ENCODE measurements at regions of chr17 and their contacts with region 1.

Region 1: DNA sequence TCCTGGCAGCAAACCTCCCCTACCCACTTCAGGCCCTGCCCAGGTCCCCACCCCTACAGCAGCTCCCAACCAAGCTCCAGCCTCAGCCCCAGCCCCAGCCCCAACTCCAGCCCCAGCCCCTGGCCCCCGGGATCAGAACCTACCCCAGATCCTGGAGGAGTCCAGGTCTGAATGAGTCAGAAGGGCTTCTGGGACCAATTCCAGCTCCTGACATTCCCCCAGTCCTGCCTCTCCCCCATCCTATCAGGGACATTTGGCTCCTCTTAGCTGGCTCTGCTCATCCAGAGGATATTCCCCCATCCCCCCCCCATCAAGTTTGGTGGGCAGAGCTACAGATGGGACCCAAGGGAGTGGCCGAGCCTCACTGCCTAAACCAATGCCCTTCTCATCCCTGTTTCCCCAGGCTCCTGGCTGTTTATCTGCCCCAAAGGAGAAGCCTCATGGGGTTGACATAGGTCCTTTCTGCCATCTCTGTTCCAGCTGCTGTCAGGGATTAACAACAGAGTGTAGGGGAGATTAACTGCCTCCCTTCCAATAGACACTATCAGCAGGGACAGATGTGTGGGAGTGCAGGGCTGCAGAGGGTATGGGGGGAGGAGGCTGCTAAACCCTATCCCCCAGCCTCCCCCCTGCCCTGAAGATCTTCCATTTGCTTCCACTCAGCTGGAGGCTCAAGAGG is 16.5 kb downstream of the CNTNAP1 start:
- DNase-seq: peak; percentile 97 to 99 (median 98)
- ATAC-seq: peak; percentile 92
- H3K4me3 ChIP-seq: no peak overlapping the region
- H3K27ac ChIP-seq: peak overlapping the region; percentile 71; the same call in 2 of the 3 replicates
- H3K4me1 ChIP-seq: peaks cover 28 to 34% of the 10 kb centered on the region in 2 experiments
- H3K27me3 ChIP-seq: no peaks in the 10 kb centered on the region
- CTCF ChIP-seq: no peak; a peak in 1 of 6 replicates
- EP300 ChIP-seq: peak; percentile 100
- POLR2A ChIP-seq: no peak
- RAD21 ChIP-seq: peak in 1 of 2 experiments; percentile 52; a peak in 2 of 4 replicates

Region 2: GRCh38 chr17:42517516-42517915 is 181.4 kb before region 1 on chr17:
- CTCF ChIA-PET with region 1: no interaction called
- POLR2A ChIA-PET with region 1: no interaction called
- in situ Hi-C with region 1: no loop called
- intact Hi-C with region 1: no loop called
- DNase-seq: peak; percentile 85 to 94 (median 91)
- ATAC-seq: peak; percentile 80
- H3K4me3 ChIP-seq: no peak overlapping the region
- H3K27ac ChIP-seq: peak overlapping the region; percentile 86
- H3K4me1 ChIP-seq: peaks cover 51 to 63% of the 10 kb centered on the region in 2 experiments
- H3K27me3 ChIP-seq: no peaks in the 10 kb centered on the region
- CTCF ChIP-seq: peak; percentile 98
- EP300 ChIP-seq: no peak
- POLR2A ChIP-seq: no peak
- RAD21 ChIP-seq: peak; percentile 73 to 82

Region 3: GRCh38 chr17:42677008-42677857 is 21.6 kb before region 1 on chr17:
- CTCF ChIA-PET with region 1: no interaction called
- POLR2A ChIA-PET with region 1: interaction called, 8 read pairs
- in situ Hi-C with region 1: no loop called
- intact Hi-C with region 1: loop called (anchors 1 kb)
- DNase-seq: peak; percentile 95 to 100 (median 98)
- ATAC-seq: peak; percentile 79
- H3K4me3 ChIP-seq: peak overlapping the region; percentile 61
- H3K27ac ChIP-seq: peak overlapping the region; percentile 95
- H3K4me1 ChIP-seq: peaks cover 42 to 75% of the 10 kb centered on the region in 2 experiments
- H3K27me3 ChIP-seq: no peaks in the 10 kb centered on the region
- CTCF ChIP-seq: no peak
- EP300 ChIP-seq: no peak
- POLR2A ChIP-seq: no peak
- RAD21 ChIP-seq: no peak

Region 4: DNA sequence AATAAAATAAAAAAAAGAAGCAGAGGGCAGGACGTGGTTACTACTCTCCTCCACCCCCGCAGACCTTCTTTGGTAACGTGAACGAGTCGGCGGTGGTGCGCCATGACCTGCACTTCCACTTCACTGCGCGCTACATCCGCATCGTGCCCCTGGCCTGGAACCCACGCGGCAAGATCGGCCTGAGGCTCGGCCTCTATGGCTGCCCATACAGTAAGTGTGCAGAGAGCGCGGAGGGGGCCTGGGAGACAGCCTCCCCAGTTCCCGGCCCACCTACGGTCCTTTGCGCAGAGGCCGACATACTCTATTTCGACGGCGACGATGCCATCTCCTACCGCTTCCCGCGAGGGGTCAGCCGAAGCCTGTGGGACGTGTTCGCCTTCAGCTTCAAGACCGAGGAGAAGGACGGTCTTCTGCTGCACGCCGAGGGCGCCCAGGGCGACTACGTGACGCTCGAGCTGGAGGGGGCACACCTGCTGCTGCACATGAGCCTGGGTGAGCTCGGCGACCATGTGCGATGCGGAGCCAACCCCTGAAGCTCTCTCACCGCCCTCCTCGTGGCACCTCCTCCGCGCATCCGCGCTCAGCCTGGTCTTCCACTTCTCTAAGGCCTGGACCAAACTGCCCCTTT is 13.8 kb before region 1 on chr17:
- CTCF ChIA-PET with region 1: no interaction called
- POLR2A ChIA-PET with region 1: interaction called, 11 read pairs
- in situ Hi-C with region 1: no loop called
- intact Hi-C with region 1: no loop called
- DNase-seq: no peak
- ATAC-seq: no peak
- H3K4me3 ChIP-seq: no peak overlapping the region
- H3K27ac ChIP-seq: no peak overlapping the region
- H3K4me1 ChIP-seq: peaks cover 14 to 61% of the 10 kb centered on the region in 2 experiments
- H3K27me3 ChIP-seq: no peaks in the 10 kb centered on the region
- CTCF ChIP-seq: no peak
- EP300 ChIP-seq: no peak
- POLR2A ChIP-seq: no peak
- RAD21 ChIP-seq: no peak

Region 5: DNA sequence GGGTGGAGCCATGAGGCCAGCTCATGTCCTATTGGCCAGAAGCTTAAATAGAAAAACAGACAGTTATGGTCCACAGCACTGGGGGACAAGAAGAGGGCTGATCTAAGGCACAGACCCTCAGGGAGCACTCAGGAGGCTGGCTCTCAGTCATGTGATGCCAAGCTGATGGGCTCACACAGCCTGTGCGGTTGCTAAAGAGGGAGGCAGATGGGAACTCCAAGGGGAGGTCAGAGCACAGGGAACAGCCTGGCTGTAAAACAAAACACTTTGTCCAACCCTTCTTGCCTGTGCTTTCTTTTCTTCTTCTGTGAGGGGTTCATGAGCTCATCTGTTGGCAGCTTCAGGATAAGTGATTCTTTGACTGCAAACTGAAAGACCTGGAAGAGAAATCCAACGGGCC is 10.7 kb after region 1 on chr17:
- CTCF ChIA-PET with region 1: interaction called, 5 read pairs
- POLR2A ChIA-PET with region 1: interaction called, 17 read pairs
- in situ Hi-C with region 1: no loop called
- intact Hi-C with region 1: no loop called
- DNase-seq: no peak
- ATAC-seq: no peak
- H3K4me3 ChIP-seq: no peak overlapping the region
- H3K27ac ChIP-seq: no peak overlapping the region
- H3K4me1 ChIP-seq: peaks cover 0 to 5% of the 10 kb centered on the region in 2 experiments; a peak in 1 of 5 replicates
- H3K27me3 ChIP-seq: no peaks in the 10 kb centered on the region
- CTCF ChIP-seq: no peak
- EP300 ChIP-seq: no peak
- POLR2A ChIP-seq: no peak
- RAD21 ChIP-seq: no peak